ENCODE measurements at regions of chr4 and their contacts with region 1.

Region 1: GRCh38 chr4:13907255-13907751 is 279.8 kb upstream of the BOD1L1 start:
- DNase-seq: peak; percentile 79
- H3K4me3 ChIP-seq: no peak overlapping the region
- H3K27ac ChIP-seq: peak overlapping the region; percentile 87
- H3K4me1 ChIP-seq: peaks cover 16% of the 10 kb centered on the region
- H3K27me3 ChIP-seq: no peaks in the 10 kb centered on the region
- CTCF ChIP-seq: peak in 1 of 2 donors; percentile 10
- POLR2A ChIP-seq: no peak

Region 2: DNA sequence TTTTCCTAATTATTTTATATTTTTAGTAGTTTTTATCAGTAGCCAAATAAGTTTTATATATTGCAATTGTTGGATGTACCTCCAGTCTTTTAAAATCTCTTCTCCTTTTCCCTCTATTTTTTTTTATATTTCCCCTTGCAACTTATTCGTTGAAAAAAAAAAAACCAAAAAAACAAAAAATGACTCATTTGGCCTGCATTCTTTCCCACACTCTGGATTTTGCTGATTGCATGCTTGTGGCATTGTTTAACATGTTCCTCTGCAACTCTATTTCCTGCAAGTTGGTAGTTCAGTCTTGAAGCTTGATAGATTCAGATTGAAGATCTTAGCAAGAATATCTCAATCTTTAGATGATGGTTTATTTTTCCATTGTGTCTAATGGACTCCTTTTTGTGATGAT is 19.2 kb before region 1 on chr4:
- CTCF ChIA-PET with region 1: interaction called, 8 read pairs
- POLR2A ChIA-PET with region 1: no interaction called
- dilution Hi-C with region 1: no loop called
- intact Hi-C with region 1: loop called (anchors 1 kb)
- DNase-seq: peak; percentile 91
- H3K4me3 ChIP-seq: no peak overlapping the region
- H3K27ac ChIP-seq: peak overlapping the region; percentile 66
- H3K4me1 ChIP-seq: peaks cover 16% of the 10 kb centered on the region
- H3K27me3 ChIP-seq: no peaks in the 10 kb centered on the region
- CTCF ChIP-seq: no peak
- POLR2A ChIP-seq: no peak

Region 3: DNA sequence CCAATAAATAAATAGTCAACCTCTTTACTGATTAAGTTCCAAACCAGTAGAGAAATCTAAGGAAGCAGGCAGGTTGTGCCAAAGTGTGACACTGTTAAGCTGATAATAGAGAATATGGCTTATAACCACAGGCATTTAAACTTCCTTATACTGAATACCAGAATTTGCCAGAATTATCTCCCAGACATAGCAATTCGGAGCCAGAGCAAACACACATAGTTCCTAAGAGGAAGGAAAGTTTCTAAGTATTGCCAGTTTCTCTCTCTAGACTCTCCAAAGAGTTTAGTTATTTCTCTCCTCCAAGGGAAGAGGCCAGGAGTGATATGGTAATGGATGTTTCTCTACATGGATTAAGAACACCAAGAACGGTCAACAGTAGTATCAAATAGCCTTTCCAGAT is 903.3 kb after region 1 on chr4:
- CTCF ChIA-PET with region 1: no interaction called
- POLR2A ChIA-PET with region 1: no interaction called
- dilution Hi-C with region 1: no loop called
- intact Hi-C with region 1: no loop called
- DNase-seq: no peak
- H3K4me3 ChIP-seq: no peak overlapping the region
- H3K27ac ChIP-seq: no peak overlapping the region
- H3K4me1 ChIP-seq: no peaks in the 10 kb centered on the region
- H3K27me3 ChIP-seq: no peaks in the 10 kb centered on the region
- CTCF ChIP-seq: no peak
- POLR2A ChIP-seq: no peak